Natural killer cell (primary cell): ENCODE measurements at regions of chr5 and their contacts with region 1.

Region 1: DNA sequence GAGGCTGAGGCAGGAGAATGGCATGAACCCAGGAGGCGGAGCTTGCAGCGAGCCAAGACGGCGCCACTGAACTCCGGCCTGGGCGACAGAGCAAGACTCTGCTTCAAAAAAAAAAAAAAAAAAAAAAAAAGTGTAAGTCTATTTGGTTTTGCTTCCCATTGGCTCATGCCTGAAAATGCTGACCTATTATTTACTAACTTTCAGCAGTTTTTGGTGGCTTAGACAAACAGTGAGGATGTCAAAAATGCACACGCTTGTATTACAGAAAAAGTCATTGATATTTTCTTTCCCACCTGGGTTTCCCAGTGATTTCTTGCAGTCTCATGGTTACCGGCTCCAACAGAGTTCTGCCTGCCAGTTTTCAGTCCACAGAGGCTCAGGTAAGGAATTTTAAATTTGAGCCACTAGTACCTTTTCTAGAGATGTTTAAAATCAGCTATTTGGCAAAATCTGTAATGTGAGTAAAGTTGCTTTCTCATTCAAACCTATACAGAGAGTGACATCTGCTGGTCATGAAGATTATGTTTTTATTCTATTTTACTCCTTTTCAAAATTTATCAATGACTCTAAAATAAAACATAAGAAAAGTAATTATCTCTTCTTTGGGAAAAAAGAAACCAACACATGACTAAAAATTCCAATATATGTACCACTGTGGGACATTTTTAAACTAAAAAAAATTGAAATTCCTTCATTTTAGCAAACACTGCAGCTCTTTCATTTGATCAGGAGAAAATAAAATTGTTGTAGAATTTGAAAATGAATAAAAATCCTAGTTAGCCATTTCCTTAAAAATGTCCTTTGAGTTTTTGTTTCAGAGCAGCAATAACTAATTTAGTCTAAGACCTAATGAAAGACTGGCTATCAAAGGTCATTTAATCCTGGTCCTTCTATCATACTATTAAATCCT is 8.8 kb downstream of the FAM200C start:
- DNase-seq: peak in 1 of 2 donors; percentile 46
- ATAC-seq: no peak
- H3K4me3 ChIP-seq: no peak overlapping the region
- H3K4me3 Mint-ChIP-seq: no peak overlapping the region
- H3K27ac ChIP-seq: no peak overlapping the region
- H3K27ac Mint-ChIP-seq: no peak overlapping the region
- H3K4me1 ChIP-seq: no peaks in the 10 kb centered on the region
- H3K4me1 Mint-ChIP-seq: no peaks in the 10 kb centered on the region
- H3K27me3 ChIP-seq: no peaks in the 10 kb centered on the region
- H3K27me3 Mint-ChIP-seq: no peaks in the 10 kb centered on the region
- CTCF ChIP-seq: peak; percentile 50

Region 2: DNA sequence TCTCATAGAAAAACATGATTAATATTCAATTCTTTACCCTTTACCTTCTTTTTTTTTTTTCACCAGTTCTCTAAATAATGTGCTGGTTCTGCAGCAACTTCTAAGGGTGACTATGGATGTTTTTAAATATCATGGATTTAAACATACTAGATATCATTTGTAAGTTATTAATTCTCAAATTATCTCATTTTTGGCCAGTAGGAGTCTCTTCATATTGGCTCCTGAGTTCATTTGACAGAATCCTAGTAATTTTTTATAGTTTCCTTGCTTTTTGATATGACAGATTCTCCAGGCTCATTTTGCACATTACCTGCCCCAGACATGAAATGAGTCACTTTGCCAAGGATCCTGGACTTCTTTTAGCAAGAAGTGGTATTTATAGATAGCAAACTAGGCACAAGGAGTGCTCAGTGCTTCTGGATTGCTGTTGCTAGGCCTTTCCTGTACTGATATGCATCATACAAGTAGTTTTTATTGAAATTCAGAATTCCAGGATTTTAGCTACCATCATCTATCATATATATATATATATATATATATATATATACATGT is 859.4 kb before region 1 on chr5:
- intact Hi-C with region 1: no loop called
- DNase-seq: no peak
- ATAC-seq: no peak
- H3K4me3 ChIP-seq: no peak overlapping the region
- H3K4me3 Mint-ChIP-seq: no peak overlapping the region
- H3K27ac ChIP-seq: no peak overlapping the region
- H3K27ac Mint-ChIP-seq: no peak overlapping the region
- H3K4me1 ChIP-seq: no peaks in the 10 kb centered on the region
- H3K4me1 Mint-ChIP-seq: no peaks in the 10 kb centered on the region
- H3K27me3 ChIP-seq: no peaks in the 10 kb centered on the region
- H3K27me3 Mint-ChIP-seq: peaks cover 0 to 4% of the 10 kb centered on the region in 2 donors
- CTCF ChIP-seq: no peak

Region 3: DNA sequence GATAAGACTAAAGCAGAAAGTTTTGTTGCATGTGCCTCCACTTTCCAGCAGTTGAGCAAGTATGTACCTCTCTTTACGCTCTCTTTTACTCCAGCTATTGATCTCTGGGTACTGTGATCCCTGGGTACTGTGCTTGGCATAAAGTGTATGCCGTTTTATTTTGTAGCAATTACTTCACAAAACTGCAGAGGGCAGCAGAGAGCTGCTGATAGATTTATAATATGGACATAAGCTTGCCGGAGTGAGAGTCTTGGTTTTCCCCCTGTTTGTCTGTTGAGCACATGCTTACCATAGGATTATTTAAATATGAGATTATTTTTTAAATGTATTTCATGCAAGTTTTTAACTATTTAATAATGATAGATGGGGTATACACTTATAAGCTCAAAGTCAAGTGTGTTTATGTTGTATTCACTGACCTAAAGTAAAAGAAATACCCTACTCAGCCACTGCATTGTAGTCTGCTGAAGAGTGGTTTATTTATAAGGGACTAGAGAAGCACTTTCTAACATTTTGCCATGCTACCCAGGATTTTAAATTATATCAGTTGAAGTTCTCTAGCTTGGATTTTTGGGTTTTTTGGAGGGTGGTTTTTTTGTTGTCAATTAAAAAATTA is 369.1 kb before region 1 on chr5:
- intact Hi-C with region 1: loop called (anchors 1 kb)
- DNase-seq: peak; percentile 33 to 85
- ATAC-seq: peak; percentile 91 to 98 (median 98)
- H3K4me3 ChIP-seq: no peak overlapping the region
- H3K4me3 Mint-ChIP-seq: no peak overlapping the region
- H3K27ac ChIP-seq: no peak overlapping the region
- H3K27ac Mint-ChIP-seq: peak overlapping the region; percentile 5 to 81
- H3K4me1 ChIP-seq: peaks cover 4% of the 10 kb centered on the region
- H3K4me1 Mint-ChIP-seq: peaks cover 20 to 31% of the 10 kb centered on the region in 2 donors
- H3K27me3 ChIP-seq: no peaks in the 10 kb centered on the region
- H3K27me3 Mint-ChIP-seq: no peaks in the 10 kb centered on the region
- CTCF ChIP-seq: peak; percentile 93

Region 4: DNA sequence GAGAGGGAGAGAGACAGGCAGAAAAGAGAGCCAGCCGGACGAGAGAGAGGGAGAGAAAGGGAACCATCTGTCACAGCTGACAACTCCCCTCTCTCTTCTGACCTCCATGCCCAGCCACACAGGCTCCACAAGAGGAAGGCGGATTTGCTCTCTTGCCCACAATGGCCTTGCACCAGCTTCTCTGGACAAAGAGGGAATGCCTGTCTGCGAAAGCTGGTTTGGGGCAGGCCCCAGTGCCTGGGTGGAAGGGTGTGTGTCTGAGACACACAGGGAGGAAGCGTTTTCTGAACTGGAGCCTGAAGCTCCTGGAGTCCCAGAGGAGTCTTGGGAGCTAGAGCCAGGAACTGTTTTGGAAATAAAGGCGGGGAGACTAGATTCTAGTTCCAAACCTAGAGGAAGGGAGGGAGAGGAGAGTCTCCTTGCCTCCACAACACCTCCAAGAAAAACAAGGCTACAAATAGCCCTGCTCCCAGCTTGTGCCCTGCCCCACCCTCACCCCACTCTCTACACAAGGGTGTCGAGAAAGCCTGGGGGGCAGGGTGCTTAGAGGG is 33.1 kb before region 1 on chr5:
- intact Hi-C with region 1: no loop called
- DNase-seq: no peak
- ATAC-seq: no peak
- H3K4me3 ChIP-seq: no peak overlapping the region
- H3K4me3 Mint-ChIP-seq: no peak overlapping the region
- H3K27ac ChIP-seq: no peak overlapping the region
- H3K27ac Mint-ChIP-seq: no peak overlapping the region
- H3K4me1 ChIP-seq: no peaks in the 10 kb centered on the region
- H3K4me1 Mint-ChIP-seq: peaks cover 0 to 5% of the 10 kb centered on the region in 2 donors
- H3K27me3 ChIP-seq: no peaks in the 10 kb centered on the region
- H3K27me3 Mint-ChIP-seq: peaks cover 2 to 12% of the 10 kb centered on the region in 2 donors
- CTCF ChIP-seq: no peak